CD8-positive, alpha-beta T cell (primary cell): ENCODE measurements at regions of chr14 and their contacts with region 1.

Region 1: DNA sequence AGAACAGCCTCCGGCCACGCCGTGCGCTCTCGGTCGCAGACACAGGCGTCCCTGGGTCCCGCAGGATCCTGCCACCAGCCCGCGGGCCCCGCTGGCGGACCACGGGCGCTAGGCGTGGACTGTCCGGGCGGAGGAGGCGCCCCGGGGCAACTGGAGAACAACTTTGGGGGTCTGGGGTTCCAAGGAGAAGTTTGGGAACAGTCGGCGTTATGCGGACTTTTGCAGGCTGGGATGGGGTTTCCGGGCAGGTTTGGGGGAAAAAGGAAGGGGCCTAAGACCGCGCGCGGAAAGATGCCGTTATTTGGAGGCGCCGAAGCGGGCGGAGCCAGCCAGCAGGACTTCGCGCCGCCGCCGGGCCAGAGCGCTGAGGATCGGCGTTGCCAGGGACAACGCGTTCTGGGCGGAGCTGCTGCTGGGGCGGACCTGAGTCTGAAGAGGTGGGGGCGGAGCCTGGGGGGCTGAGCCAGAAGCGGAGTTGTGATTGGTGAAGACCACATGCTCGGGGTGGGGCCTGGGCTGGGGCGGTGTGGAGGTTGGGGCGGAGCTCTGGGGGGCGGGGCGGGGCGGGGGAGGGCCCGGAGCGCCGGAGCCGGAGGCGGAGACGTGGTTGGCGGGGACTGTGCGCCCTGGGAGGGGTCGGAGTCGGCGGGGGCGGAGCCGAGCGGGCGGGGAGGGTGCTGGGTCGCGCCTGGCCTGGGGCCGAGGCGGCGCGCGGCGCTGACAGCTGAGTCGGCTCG is at the start of gene CYP46A1:
- DNase-seq: peak; percentile 99 to 100 (median 99)
- ATAC-seq: peak; percentile 95
- H3K4me3 ChIP-seq: peak within 1 kb of the TSS; percentile 83 to 93
- H3K4me3 Mint-ChIP-seq: peak within 1 kb of the TSS; percentile 96
- H3K27ac ChIP-seq: peak within 1 kb of the TSS; percentile 69 to 84
- H3K27ac Mint-ChIP-seq: peak within 1 kb of the TSS; percentile 77
- H3K4me1 ChIP-seq: peaks cover 8% of the 10 kb centered on the region
- H3K4me1 Mint-ChIP-seq: peaks cover 14% of the 10 kb centered on the region
- H3K27me3 ChIP-seq: peaks cover 0 to 10% of the 10 kb centered on the region in 2 experiments
- H3K27me3 Mint-ChIP-seq: peaks cover 7% of the 10 kb centered on the region
- CTCF ChIP-seq: no peak
- total RNA-seq, gene CYP46A1: 0.19 to 0.30 TPM

Region 2: DNA sequence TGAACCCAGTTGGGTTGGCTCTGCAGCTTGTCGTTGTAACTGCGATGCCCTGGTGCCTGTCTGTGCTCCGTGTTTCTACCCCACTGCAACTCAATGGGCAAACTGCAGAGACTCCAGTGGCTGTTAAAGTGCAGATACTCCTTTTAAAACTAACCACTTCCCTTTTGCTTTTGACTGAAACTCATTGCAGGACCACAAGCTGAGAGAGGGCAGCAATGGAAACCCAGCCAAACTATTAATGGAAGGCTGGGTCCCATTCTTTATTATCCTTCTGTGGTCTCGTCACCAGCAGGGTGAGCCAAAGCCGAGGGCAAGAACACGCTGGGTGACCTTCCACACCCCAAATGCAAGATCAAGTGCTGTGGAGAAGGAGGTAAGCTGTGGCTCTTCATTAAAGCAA is 1976.2 kb before region 1 on chr14:
- CTCF ChIA-PET with region 1: no interaction called
- POLR2A ChIA-PET with region 1: no interaction called
- intact Hi-C with region 1: loop called in 1 of 2 experiments (anchors 10 kb)
- DNase-seq: peak in 6 of 9 experiments; percentile 26 to 68 (median 50)
- ATAC-seq: peak; percentile 13
- H3K4me3 ChIP-seq: peak overlapping the region; percentile 6 to 16
- H3K4me3 Mint-ChIP-seq: peak overlapping the region; percentile 63
- H3K27ac ChIP-seq: peak overlapping the region in 1 of 2 experiments; percentile 63
- H3K27ac Mint-ChIP-seq: peak overlapping the region; percentile 78
- H3K4me1 ChIP-seq: peaks cover 84% of the 10 kb centered on the region
- H3K4me1 Mint-ChIP-seq: peaks cover 97% of the 10 kb centered on the region
- H3K27me3 ChIP-seq: no peaks in the 10 kb centered on the region
- H3K27me3 Mint-ChIP-seq: no peaks in the 10 kb centered on the region
- CTCF ChIP-seq: no peak

Region 3: GRCh38 chr14:99518441-99519346 is 165.1 kb before region 1 on chr14:
- CTCF ChIA-PET with region 1: interaction called, 3 read pairs
- POLR2A ChIA-PET with region 1: no interaction called
- intact Hi-C with region 1: loop called (anchors 2 kb)
- DNase-seq: peak; percentile 68 to 92 (median 80)
- ATAC-seq: peak; percentile 91
- H3K4me3 ChIP-seq: no peak overlapping the region
- H3K4me3 Mint-ChIP-seq: no peak overlapping the region
- H3K27ac ChIP-seq: no peak overlapping the region
- H3K27ac Mint-ChIP-seq: no peak overlapping the region
- H3K4me1 ChIP-seq: peaks cover 3% of the 10 kb centered on the region
- H3K4me1 Mint-ChIP-seq: no peaks in the 10 kb centered on the region
- H3K27me3 ChIP-seq: no peaks in the 10 kb centered on the region
- H3K27me3 Mint-ChIP-seq: no peaks in the 10 kb centered on the region
- CTCF ChIP-seq: peak; percentile 88

Region 4: DNA sequence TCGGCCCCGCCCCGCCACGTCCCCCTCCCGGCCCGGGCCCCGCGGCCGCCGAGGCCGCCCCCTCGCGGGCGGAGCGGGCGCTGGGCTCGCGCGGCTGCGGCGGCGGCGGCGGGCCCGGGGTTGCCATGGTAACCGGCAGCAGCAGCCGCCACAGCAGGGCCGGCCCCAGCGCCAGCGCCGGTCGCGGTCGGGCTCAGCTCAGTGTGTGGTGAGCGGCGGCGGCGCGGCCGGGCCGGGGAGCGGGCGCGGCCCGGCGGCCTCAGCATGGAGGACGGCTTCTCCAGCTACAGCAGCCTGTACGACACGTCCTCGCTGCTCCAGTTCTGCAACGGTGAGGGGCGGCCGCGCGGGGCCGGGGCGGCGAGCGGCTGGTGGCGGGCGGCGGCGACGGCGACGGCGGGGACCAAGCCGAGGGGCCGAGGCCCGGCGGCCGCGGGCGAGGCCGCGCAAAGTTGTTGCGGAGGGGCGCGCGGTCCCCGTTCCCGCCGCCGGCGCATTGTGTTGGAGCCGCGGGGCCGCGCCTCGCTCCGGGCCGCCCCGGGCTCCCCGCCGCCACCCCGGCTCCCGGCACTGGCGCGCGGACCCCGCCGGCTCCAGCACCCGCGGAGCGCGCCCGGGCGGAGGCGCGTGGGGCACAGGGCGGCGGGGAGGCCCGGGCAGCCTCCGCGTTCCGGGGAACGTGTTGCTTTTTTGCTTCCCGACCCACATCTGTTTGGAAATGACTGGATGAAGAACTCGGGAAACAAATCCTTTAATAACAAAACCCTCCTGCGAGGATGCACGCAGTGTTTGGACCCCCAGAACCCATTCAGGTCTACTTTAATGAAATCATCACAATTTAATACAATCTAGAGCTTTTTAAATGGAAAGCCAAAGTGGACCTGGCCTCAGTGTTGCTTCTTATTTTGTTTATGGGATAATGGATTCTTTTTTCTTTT is 109.7 kb after region 1 on chr14 and contains the start of gene EML1:
- CTCF ChIA-PET with region 1: no interaction called
- POLR2A ChIA-PET with region 1: no interaction called
- intact Hi-C with region 1: loop called in 1 of 2 experiments (anchors 5 kb)
- DNase-seq: peak; percentile 44 to 88 (median 67)
- ATAC-seq: peak; percentile 80
- H3K4me3 ChIP-seq: peak within 1 kb of the TSS in 1 of 2 experiments; percentile 26
- H3K4me3 Mint-ChIP-seq: peak within 1 kb of the TSS; percentile 80
- H3K27ac ChIP-seq: no peak within 1 kb of the TSS
- H3K27ac Mint-ChIP-seq: peak within 1 kb of the TSS; percentile 11
- H3K4me1 ChIP-seq: peaks cover 7% of the 10 kb centered on the region
- H3K4me1 Mint-ChIP-seq: peaks cover 14% of the 10 kb centered on the region
- H3K27me3 ChIP-seq: peaks cover 0 to 15% of the 10 kb centered on the region in 2 experiments
- H3K27me3 Mint-ChIP-seq: peaks cover 22% of the 10 kb centered on the region
- CTCF ChIP-seq: no peak
- total RNA-seq, gene EML1: not detected

Region 5: GRCh38 chr14:99971087-99971940 is 287.5 kb after region 1 on chr14:
- CTCF ChIA-PET with region 1: no interaction called
- POLR2A ChIA-PET with region 1: no interaction called
- intact Hi-C with region 1: loop called in 1 of 2 experiments (anchors 5 kb)
- DNase-seq: peak; percentile 62 to 89 (median 78)
- ATAC-seq: peak; percentile 92
- H3K4me3 ChIP-seq: peak overlapping the region; percentile 35 to 67
- H3K4me3 Mint-ChIP-seq: peak overlapping the region; percentile 78
- H3K27ac ChIP-seq: no peak overlapping the region
- H3K27ac Mint-ChIP-seq: no peak overlapping the region
- H3K4me1 ChIP-seq: peaks cover 11% of the 10 kb centered on the region
- H3K4me1 Mint-ChIP-seq: peaks cover 12% of the 10 kb centered on the region
- H3K27me3 ChIP-seq: no peaks in the 10 kb centered on the region
- H3K27me3 Mint-ChIP-seq: peaks cover 5% of the 10 kb centered on the region
- CTCF ChIP-seq: no peak

Region 6: GRCh38 chr14:99982537-99983250 is 298.9 kb after region 1 on chr14:
- CTCF ChIA-PET with region 1: no interaction called
- POLR2A ChIA-PET with region 1: no interaction called
- intact Hi-C with region 1: no loop called
- DNase-seq: peak; percentile 30 to 85 (median 65)
- ATAC-seq: peak; percentile 100
- H3K4me3 ChIP-seq: no peak overlapping the region
- H3K4me3 Mint-ChIP-seq: no peak overlapping the region
- H3K27ac ChIP-seq: no peak overlapping the region
- H3K27ac Mint-ChIP-seq: no peak overlapping the region
- H3K4me1 ChIP-seq: peaks cover 10% of the 10 kb centered on the region
- H3K4me1 Mint-ChIP-seq: peaks cover 12% of the 10 kb centered on the region
- H3K27me3 ChIP-seq: no peaks in the 10 kb centered on the region
- H3K27me3 Mint-ChIP-seq: no peaks in the 10 kb centered on the region
- CTCF ChIP-seq: peak; percentile 95

Region 7: DNA sequence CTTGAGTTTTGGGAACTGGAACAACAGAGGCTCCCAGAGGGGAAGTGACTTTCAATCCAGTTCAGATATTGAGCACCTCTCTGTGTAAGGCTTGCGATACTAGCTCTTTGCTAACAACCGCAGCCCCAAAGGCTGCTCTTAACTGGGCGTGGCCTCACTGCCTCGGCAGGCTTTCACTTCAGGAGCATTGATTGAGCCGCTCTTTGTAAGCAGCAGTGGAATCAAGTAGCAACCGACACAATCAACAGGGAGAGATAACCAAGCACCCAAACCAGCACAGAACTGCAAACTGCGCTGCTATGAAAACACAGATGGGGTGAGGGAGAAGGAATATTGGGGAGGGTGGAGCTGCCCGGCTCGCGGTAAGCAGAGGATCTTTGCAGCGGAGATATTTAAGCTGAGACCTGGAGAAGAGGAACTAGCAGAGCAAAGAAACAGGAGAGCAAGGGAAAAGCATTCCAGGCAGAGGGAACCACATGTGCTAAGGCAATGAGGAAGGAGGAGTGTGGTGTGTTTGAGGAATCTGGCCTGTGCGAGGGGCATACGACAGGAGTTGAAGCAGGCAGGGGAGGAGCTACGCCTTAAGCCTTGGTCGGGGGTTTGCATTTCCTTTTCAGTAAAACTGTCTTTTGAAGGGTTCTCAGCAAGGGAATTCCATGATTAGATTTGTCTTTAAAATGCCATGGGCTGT is 537.9 kb after region 1 on chr14:
- CTCF ChIA-PET with region 1: no interaction called
- POLR2A ChIA-PET with region 1: no interaction called
- intact Hi-C with region 1: loop called in 1 of 2 experiments (anchors 5 kb)
- DNase-seq: peak; percentile 40 to 85 (median 74)
- ATAC-seq: peak; percentile 96
- H3K4me3 ChIP-seq: peak overlapping the region; percentile 68 to 95
- H3K4me3 Mint-ChIP-seq: no peak overlapping the region
- H3K27ac ChIP-seq: peak overlapping the region; percentile 76 to 77
- H3K27ac Mint-ChIP-seq: no peak overlapping the region
- H3K4me1 ChIP-seq: peaks cover 45% of the 10 kb centered on the region
- H3K4me1 Mint-ChIP-seq: peaks cover 7% of the 10 kb centered on the region
- H3K27me3 ChIP-seq: no peaks in the 10 kb centered on the region
- H3K27me3 Mint-ChIP-seq: no peaks in the 10 kb centered on the region
- CTCF ChIP-seq: no peak

Region 8: DNA sequence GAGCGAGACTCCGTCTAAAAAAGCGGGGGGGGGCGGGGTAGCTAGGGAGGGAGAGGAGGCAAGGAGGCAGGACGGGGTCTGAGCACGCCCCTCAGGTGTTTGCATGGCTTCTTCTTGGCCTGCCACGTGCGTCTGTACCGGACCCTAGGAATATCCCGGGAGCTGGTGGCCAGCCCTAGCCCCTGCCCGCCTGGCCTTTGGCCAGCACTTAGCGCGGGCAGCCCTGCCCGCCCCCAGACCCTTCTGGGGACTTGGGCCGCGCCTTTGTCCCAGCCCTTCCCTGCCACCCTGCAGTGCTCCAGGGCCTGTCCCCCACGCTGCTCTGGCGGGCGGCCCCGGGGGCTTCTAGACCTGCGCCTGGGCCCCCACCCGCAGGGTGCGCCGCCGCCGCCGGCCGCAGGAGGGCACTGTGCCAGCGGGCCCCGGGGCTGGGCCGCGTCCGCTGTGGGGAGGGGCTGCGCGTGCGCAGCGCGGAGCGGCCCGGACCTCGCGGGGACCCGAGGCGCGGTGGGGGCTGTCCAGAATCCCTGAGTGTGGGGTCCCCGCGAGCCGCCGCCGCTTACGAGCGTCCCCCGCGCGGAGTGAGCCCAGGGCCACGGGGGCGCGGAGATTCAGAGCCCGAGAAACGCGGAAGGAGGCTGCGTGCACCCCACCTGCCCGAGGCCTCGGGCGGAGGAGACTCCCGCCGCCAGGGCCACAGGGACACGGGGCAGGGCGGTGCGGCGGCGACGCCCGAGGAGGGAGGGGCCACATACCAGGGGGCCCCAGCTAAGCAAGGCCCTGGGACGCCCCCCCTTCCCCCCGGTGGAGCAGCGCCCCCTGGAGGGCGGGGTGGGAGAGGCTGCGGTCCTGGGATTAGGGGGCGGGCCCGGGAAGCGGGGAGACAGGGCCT is 601.5 kb after region 1 on chr14:
- CTCF ChIA-PET with region 1: no interaction called
- POLR2A ChIA-PET with region 1: no interaction called
- intact Hi-C with region 1: loop called in 1 of 2 experiments (anchors 2 kb)
- DNase-seq: peak; percentile 64 to 88 (median 78)
- ATAC-seq: peak; percentile 91
- H3K4me3 ChIP-seq: peak overlapping the region; percentile 63 to 90
- H3K4me3 Mint-ChIP-seq: peak overlapping the region; percentile 81
- H3K27ac ChIP-seq: peak overlapping the region; percentile 72 to 76
- H3K27ac Mint-ChIP-seq: no peak overlapping the region
- H3K4me1 ChIP-seq: peaks cover 5% of the 10 kb centered on the region
- H3K4me1 Mint-ChIP-seq: peaks cover 11% of the 10 kb centered on the region
- H3K27me3 ChIP-seq: no peaks in the 10 kb centered on the region
- H3K27me3 Mint-ChIP-seq: no peaks in the 10 kb centered on the region
- CTCF ChIP-seq: peak; percentile 96